Heart left ventricle (tissue), 16 donors: ENCODE measurements at regions of chr12 and their contacts with region 1.

Region 1: GRCh38 chr12:26153421-26154154 is 28.8 kb upstream of the BHLHE41 start:
- DNase-seq: peak in 4 of 5 donors; percentile 15 to 46 (median 29)
- ATAC-seq: peak; percentile 88 to 98 (median 92)
- H3K4me3 ChIP-seq: no peak overlapping the region
- H3K27ac ChIP-seq: peak overlapping the region in 10 of 12 donors; percentile 8 to 72 (median 49)
- H3K4me1 ChIP-seq: peaks cover 0 to 34% (median 11%) of the 10 kb centered on the region in 12 donors
- H3K27me3 ChIP-seq: no peaks in the 10 kb centered on the region
- CTCF ChIP-seq: peak in 4 of 12 donors; percentile 10 to 30 (median 20)
- POLR2A ChIP-seq: no peak

Region 2: GRCh38 chr12:26195641-26196420 is 42.2 kb after region 1 on chr12:
- intact Hi-C with region 1: loop called in 1 of 10 experiments (anchors 5 kb)
- DNase-seq: peak; percentile 59 to 71 (median 62)
- ATAC-seq: peak; percentile 72 to 89 (median 86)
- H3K4me3 ChIP-seq: peak overlapping the region; percentile 32 to 79 (median 67)
- H3K27ac ChIP-seq: peak overlapping the region; percentile 35 to 93 (median 84)
- H3K4me1 ChIP-seq: peaks cover 0 to 45% (median 25%) of the 10 kb centered on the region in 12 donors
- H3K27me3 ChIP-seq: peaks cover 0 to 15% (median 0%) of the 10 kb centered on the region in 9 donors
- CTCF ChIP-seq: no peak
- POLR2A ChIP-seq: no peak